Activated naive CD8-positive, alpha-beta T cell treated with anti-CD3 and anti-CD28 coated beads, Interleukin-2, amount 10 ng/mL, durations not matched to agents 7 days and 5 days (primary cell): ENCODE measurements at regions of chr3 and their contacts with region 1.

Region 1: GRCh38 chr3:18444595-18445400 is 19.7 kb upstream of the SATB1 start:
- DNase-seq: peak; percentile 90
- ATAC-seq: peak; percentile 70
- H3K4me3 Mint-ChIP-seq: peak overlapping the region; percentile 99
- H3K27ac Mint-ChIP-seq: peak overlapping the region; percentile 96
- H3K4me1 Mint-ChIP-seq: peaks cover 34% of the 10 kb centered on the region
- H3K27me3 Mint-ChIP-seq: no peaks in the 10 kb centered on the region

Region 2: GRCh38 chr3:18282507-18282906 is 162.3 kb before region 1 on chr3:
- POLR2A ChIA-PET with region 1: no interaction called
- DNase-seq: no peak
- ATAC-seq: no peak
- H3K4me3 Mint-ChIP-seq: no peak overlapping the region
- H3K27ac Mint-ChIP-seq: no peak overlapping the region
- H3K4me1 Mint-ChIP-seq: no peaks in the 10 kb centered on the region
- H3K27me3 Mint-ChIP-seq: peaks cover 8% of the 10 kb centered on the region

Region 3: GRCh38 chr3:18417904-18418572 is 26.8 kb before region 1 on chr3:
- POLR2A ChIA-PET with region 1: interaction called, 120 read pairs
- DNase-seq: no peak
- ATAC-seq: peak; percentile 14
- H3K4me3 Mint-ChIP-seq: peak overlapping the region; percentile 82
- H3K27ac Mint-ChIP-seq: peak overlapping the region; percentile 90
- H3K4me1 Mint-ChIP-seq: peaks cover 60% of the 10 kb centered on the region
- H3K27me3 Mint-ChIP-seq: no peaks in the 10 kb centered on the region

Region 4: DNA sequence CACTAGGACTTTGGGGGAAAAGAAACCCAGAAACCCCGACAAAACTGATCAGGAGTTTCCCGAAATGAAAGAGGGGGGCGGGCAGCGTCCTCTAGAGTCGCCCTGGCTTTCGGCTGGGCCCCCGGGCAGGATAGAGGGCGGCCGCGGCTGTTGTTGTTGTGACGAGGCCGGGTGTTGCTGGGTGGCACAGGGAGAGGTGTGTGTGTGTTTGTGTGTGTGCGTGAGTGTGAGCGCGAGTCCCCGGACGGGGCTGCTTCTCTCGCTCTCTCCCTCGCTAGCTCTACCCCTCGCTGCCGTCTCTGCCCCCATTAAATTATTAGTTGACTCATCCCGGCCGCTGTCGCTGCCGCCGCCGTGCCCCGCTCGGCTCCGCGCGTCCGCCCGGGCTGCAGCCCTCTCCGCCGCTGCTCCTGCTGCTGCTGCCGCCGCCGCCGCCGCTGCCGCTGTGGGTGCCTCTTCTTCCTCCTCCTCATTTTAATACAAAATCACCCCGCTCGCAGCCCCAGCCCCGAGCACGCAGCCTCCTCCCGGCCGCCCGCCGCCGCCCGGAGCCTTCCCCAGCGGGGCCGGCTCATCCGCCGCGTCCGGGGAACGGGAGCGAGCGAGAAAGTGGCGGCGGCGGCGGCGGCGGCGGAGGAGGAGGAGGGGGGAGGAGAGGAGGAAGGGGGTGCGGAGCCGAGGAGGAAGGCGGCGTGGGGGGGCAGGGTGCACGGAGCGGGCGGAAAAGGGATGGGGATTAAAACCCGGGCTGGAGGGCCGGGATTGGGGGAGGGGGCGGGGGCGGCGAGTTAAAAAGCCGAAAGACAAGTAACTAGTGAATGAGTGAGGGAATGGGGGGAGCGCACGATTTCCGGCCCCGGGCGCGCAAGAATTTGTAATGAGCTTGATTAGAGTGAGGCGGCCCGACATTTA is 19.8 kb before region 1 on chr3 and contains the start of gene SATB1:
- POLR2A ChIA-PET with region 1: interaction called, 133 read pairs
- DNase-seq: peak; percentile 79
- ATAC-seq: peak; percentile 13
- H3K4me3 Mint-ChIP-seq: peak within 1 kb of the TSS; percentile 87
- H3K27ac Mint-ChIP-seq: peak within 1 kb of the TSS; percentile 91
- H3K4me1 Mint-ChIP-seq: peaks cover 54% of the 10 kb centered on the region
- H3K27me3 Mint-ChIP-seq: no peaks in the 10 kb centered on the region
- total RNA-seq, gene SATB1: 281 to 288 TPM

Region 5: GRCh38 chr3:18559331-18559842 is 114.6 kb after region 1 on chr3:
- POLR2A ChIA-PET with region 1: interaction called, 12 read pairs
- DNase-seq: no peak
- ATAC-seq: peak; percentile 45
- H3K4me3 Mint-ChIP-seq: peak overlapping the region; percentile 46
- H3K27ac Mint-ChIP-seq: peak overlapping the region; percentile 77
- H3K4me1 Mint-ChIP-seq: peaks cover 37% of the 10 kb centered on the region
- H3K27me3 Mint-ChIP-seq: no peaks in the 10 kb centered on the region

Region 6: DNA sequence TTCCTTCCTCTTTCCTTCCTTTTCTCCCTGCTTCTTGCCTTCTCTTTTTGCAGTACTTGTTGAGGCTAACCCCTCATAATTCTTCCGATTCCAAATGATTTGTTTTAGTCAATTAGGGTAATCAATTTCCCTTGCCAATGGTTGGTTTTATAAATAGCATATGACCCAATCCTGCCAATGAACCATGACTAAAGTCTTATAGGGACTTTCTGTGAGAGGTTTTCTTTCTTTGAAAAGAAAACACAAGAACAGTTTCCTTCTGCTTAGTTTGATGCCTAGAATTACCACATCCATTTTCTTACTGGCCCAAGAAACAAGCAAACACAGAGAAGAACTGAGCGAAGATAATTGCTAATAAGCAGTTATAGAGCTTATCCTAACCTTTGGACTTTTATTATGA is 272.8 kb after region 1 on chr3:
- POLR2A ChIA-PET with region 1: interaction called, 65 read pairs
- DNase-seq: no peak
- ATAC-seq: peak; percentile 44
- H3K4me3 Mint-ChIP-seq: peak overlapping the region; percentile 75
- H3K27ac Mint-ChIP-seq: peak overlapping the region; percentile 95
- H3K4me1 Mint-ChIP-seq: peaks cover 59% of the 10 kb centered on the region
- H3K27me3 Mint-ChIP-seq: no peaks in the 10 kb centered on the region

Region 7: GRCh38 chr3:18758047-18758704 is 313.4 kb after region 1 on chr3:
- POLR2A ChIA-PET with region 1: interaction called, 19 read pairs
- DNase-seq: no peak
- ATAC-seq: peak; percentile 96
- H3K4me3 Mint-ChIP-seq: no peak overlapping the region
- H3K27ac Mint-ChIP-seq: peak overlapping the region; percentile 47
- H3K4me1 Mint-ChIP-seq: peaks cover 29% of the 10 kb centered on the region
- H3K27me3 Mint-ChIP-seq: no peaks in the 10 kb centered on the region